Left cardiac atrium (tissue), 4 donors: ENCODE measurements at regions of chr17 and their contacts with region 1.

Region 1: GRCh38 chr17:1122533-1123392 is 57.0 kb downstream of the ABR start:
- DNase-seq: peak; percentile 86
- ATAC-seq: peak; percentile 81 to 89

Region 2: GRCh38 chr17:1186923-1187771 is 64.4 kb after region 1 on chr17:
- intact Hi-C with region 1: loop called (anchors 2 to 5 kb)
- DNase-seq: peak; percentile 89
- ATAC-seq: peak; percentile 89 to 91

Region 3: DNA sequence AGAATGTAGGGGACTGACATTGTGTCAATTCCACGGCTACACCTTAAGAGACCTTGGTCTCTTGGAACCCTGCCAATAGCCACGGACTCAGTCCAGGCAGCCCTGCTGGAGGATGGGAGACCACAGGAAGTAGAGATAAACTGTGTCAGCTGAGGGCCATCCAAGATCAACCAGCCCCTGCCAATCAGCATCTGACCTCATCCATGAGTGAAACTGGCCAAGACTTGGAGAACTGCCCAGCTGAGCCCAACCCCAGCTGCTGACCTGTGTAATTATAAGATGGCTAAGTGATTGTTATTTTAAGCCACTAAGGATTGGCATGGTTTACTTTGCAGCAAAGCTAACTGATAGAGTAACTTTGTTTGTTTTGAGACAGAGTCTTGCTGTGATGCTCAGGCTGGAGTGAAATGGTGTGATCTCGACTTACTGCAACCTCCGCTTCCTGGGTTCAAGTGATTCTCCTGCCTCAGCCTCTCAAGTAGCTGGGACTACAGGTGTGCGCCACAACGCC is 290.6 kb after region 1 on chr17:
- intact Hi-C with region 1: no loop called
- DNase-seq: peak; percentile 91
- ATAC-seq: peak; percentile 93 to 95